ENCODE measurements at regions of chr11 and their contacts with region 1.

Region 1: GRCh38 chr11:91011503-91011902 is 788.7 kb upstream of the CHORDC1 start:
- DNase-seq: no peak
- ATAC-seq: no peak
- H3K4me3 ChIP-seq: no peak overlapping the region
- H3K4me3 Mint-ChIP-seq: no peak overlapping the region
- H3K27ac ChIP-seq: no peak overlapping the region
- H3K27ac Mint-ChIP-seq: no peak overlapping the region
- H3K4me1 ChIP-seq: no peaks in the 10 kb centered on the region
- H3K4me1 Mint-ChIP-seq: no peaks in the 10 kb centered on the region
- H3K27me3 ChIP-seq: no peaks in the 10 kb centered on the region
- H3K27me3 Mint-ChIP-seq: no peaks in the 10 kb centered on the region

Region 2: GRCh38 chr11:90997241-90997640 is 14.3 kb before region 1 on chr11:
- CTCF ChIA-PET with region 1: no interaction called
- POLR2A ChIA-PET with region 1: no interaction called
- intact Hi-C with region 1: no loop called
- DNase-seq: no peak
- ATAC-seq: no peak
- H3K4me3 ChIP-seq: no peak overlapping the region
- H3K4me3 Mint-ChIP-seq: no peak overlapping the region
- H3K27ac ChIP-seq: no peak overlapping the region
- H3K27ac Mint-ChIP-seq: no peak overlapping the region
- H3K4me1 ChIP-seq: no peaks in the 10 kb centered on the region
- H3K4me1 Mint-ChIP-seq: no peaks in the 10 kb centered on the region
- H3K27me3 ChIP-seq: no peaks in the 10 kb centered on the region
- H3K27me3 Mint-ChIP-seq: no peaks in the 10 kb centered on the region

Region 3: GRCh38 chr11:91078221-91078620 is 66.7 kb after region 1 on chr11:
- CTCF ChIA-PET with region 1: no interaction called
- POLR2A ChIA-PET with region 1: no interaction called
- intact Hi-C with region 1: loop called in 1 of 2 experiments (anchors 10 kb)
- DNase-seq: no peak
- ATAC-seq: no peak
- H3K4me3 ChIP-seq: no peak overlapping the region
- H3K4me3 Mint-ChIP-seq: no peak overlapping the region
- H3K27ac ChIP-seq: no peak overlapping the region
- H3K27ac Mint-ChIP-seq: no peak overlapping the region
- H3K4me1 ChIP-seq: no peaks in the 10 kb centered on the region
- H3K4me1 Mint-ChIP-seq: no peaks in the 10 kb centered on the region
- H3K27me3 ChIP-seq: no peaks in the 10 kb centered on the region
- H3K27me3 Mint-ChIP-seq: no peaks in the 10 kb centered on the region